Transverse colon (tissue), 4 donors: ENCODE measurements at regions of chr4 and their contacts with region 1.

Region 1: GRCh38 chr4:18608908-18609533 is 587.5 kb upstream of the LCORL start:
- DNase-seq: no peak
- H3K4me3 ChIP-seq: no peak overlapping the region
- H3K27ac ChIP-seq: no peak overlapping the region
- H3K4me1 ChIP-seq: no peaks in the 10 kb centered on the region
- H3K27me3 ChIP-seq: no peaks in the 10 kb centered on the region
- CTCF ChIP-seq: no peak
- EP300 ChIP-seq: no peak
- POLR2A ChIP-seq: no peak

Region 2: GRCh38 chr4:17823871-17824669 is 785.0 kb before region 1 on chr4:
- in situ Hi-C with region 1: no loop called
- intact Hi-C with region 1: loop called (anchors 5 kb)
- DNase-seq: no peak
- H3K4me3 ChIP-seq: no peak overlapping the region
- H3K27ac ChIP-seq: no peak overlapping the region
- H3K4me1 ChIP-seq: no peaks in the 10 kb centered on the region
- H3K27me3 ChIP-seq: no peaks in the 10 kb centered on the region
- CTCF ChIP-seq: no peak
- EP300 ChIP-seq: no peak
- POLR2A ChIP-seq: no peak

Region 3: GRCh38 chr4:19177616-19178015 is 568.6 kb after region 1 on chr4:
- in situ Hi-C with region 1: no loop called
- intact Hi-C with region 1: no loop called
- DNase-seq: no peak
- H3K4me3 ChIP-seq: no peak overlapping the region
- H3K27ac ChIP-seq: no peak overlapping the region
- H3K4me1 ChIP-seq: peaks cover 0 to 9% (median 0%) of the 10 kb centered on the region in 4 donors
- H3K27me3 ChIP-seq: no peaks in the 10 kb centered on the region
- CTCF ChIP-seq: no peak
- EP300 ChIP-seq: no peak
- POLR2A ChIP-seq: no peak